CD8-positive, alpha-beta T cell (primary cell): ENCODE measurements at regions of chr5 and their contacts with region 1.

Region 1: GRCh38 chr5:111512375-111513130 is at the start of gene STARD4:
- DNase-seq: peak; percentile 89 to 97 (median 95)
- ATAC-seq: peak; percentile 94
- H3K4me3 ChIP-seq: peak within 1 kb of the TSS; percentile 96 to 97
- H3K4me3 Mint-ChIP-seq: peak within 1 kb of the TSS; percentile 96
- H3K27ac ChIP-seq: peak within 1 kb of the TSS; percentile 75 to 92
- H3K27ac Mint-ChIP-seq: peak within 1 kb of the TSS; percentile 95
- H3K4me1 ChIP-seq: peaks cover 26% of the 10 kb centered on the region
- H3K4me1 Mint-ChIP-seq: peaks cover 41% of the 10 kb centered on the region
- H3K27me3 ChIP-seq: no peaks in the 10 kb centered on the region
- H3K27me3 Mint-ChIP-seq: no peaks in the 10 kb centered on the region
- CTCF ChIP-seq: no peak
- total RNA-seq, gene STARD4: 31.7 to 32.4 TPM

Region 2: DNA sequence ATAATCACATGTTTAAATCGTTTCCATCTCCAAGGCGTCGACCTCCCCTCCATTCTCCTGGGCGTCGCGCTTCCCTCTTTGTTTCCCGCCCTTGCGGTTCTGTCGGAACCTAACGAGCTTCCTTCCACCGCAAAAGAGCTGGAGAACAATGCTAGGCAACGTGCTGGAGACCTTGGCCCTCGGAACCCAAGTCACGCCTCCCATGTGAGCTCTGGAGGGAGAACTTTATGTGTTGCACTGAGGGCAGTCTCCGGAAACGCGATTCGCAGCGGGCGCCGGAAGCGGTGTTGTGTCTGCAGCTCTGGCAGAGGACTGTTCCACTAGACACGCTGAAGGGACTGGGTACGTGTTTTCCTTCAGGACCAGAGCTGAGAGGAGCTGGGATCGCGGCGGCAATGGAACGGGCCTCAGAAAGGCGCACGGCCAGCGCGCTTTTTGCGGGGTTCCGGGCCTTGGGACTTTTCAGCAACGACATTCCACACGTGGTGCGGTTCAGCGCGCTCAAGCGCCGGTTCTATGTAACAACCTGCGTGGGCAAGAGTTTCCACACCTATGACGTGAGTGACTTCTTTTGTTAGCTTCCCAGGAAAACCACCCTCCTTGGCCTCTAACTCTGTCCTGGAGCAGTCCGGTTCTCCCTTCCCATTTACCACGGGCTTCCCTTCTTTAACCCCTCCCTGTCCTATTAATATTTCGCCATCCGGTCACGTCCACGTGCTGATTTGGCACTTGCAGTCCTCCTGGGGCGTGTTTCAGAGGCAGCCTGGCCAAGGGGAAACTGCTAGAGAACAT is 420.3 kb before region 1 on chr5 and contains the start of gene WDR36:
- CTCF ChIA-PET with region 1: no interaction called
- POLR2A ChIA-PET with region 1: interaction called, 3 read pairs
- intact Hi-C with region 1: loop called in 1 of 2 experiments (anchors 1 kb)
- DNase-seq: peak; percentile 77 to 94 (median 86)
- ATAC-seq: peak; percentile 92
- H3K4me3 ChIP-seq: peak within 1 kb of the TSS; percentile 96
- H3K4me3 Mint-ChIP-seq: peak within 1 kb of the TSS; percentile 95
- H3K27ac ChIP-seq: peak within 1 kb of the TSS; percentile 86 to 89
- H3K27ac Mint-ChIP-seq: peak within 1 kb of the TSS; percentile 94
- H3K4me1 ChIP-seq: peaks cover 24% of the 10 kb centered on the region
- H3K4me1 Mint-ChIP-seq: peaks cover 38% of the 10 kb centered on the region
- H3K27me3 ChIP-seq: no peaks in the 10 kb centered on the region
- H3K27me3 Mint-ChIP-seq: peaks cover 4% of the 10 kb centered on the region
- CTCF ChIP-seq: no peak
- total RNA-seq, gene WDR36: 29.5 to 32.6 TPM

Region 3: DNA sequence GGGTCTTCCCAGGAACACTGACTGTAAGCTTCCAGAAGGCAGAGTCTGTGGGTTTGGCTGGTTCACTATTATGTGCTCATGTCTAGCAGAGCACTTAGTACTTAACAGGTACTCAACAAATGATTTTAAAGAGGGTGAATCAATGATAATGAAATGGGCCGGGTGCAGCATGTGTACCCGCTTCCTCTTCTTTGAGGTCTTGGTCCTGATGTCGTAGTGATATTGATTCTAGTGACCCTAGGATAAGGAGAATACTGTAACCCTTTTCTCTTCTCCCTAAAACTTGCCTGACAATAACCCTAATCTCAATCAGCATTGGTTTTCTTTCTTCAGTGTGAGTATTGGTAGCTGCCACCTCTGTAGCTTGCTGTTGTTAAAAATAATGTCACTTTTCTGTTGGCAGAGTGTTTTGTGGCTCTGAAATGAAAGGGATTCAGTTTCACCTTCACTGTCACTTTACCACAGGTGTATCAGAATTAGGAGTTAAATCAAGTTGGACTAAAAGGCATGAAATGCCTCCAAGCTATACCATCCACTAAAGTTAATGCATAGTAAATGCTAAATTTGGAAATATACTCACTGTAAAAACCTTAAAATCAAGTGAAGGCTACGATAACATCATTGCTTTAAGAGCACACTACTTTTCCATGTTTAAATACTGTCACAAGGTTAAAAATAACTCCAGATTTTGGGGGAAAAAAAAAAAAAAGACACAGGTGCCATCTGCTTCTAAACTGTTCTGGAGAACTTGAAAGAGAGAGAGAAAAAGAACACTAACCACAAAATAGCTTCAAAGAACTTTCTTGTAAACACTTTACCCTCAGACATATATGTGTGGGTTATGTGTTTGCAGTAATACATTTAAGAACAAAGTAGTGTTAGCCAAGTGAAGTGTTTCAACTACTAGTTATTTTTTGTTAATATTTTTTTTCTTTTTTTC is 282.4 kb before region 1 on chr5:
- CTCF ChIA-PET with region 1: no interaction called
- POLR2A ChIA-PET with region 1: no interaction called
- intact Hi-C with region 1: loop called in 1 of 2 experiments (anchors 2 kb)
- DNase-seq: peak in 2 of 9 experiments; percentile 67 to 83
- ATAC-seq: peak; percentile 36
- H3K4me3 ChIP-seq: peak overlapping the region; percentile 4 to 46
- H3K4me3 Mint-ChIP-seq: peak overlapping the region; percentile 79
- H3K27ac ChIP-seq: peak overlapping the region; percentile 31 to 72
- H3K27ac Mint-ChIP-seq: peak overlapping the region; percentile 99
- H3K4me1 ChIP-seq: peaks cover 75% of the 10 kb centered on the region
- H3K4me1 Mint-ChIP-seq: peaks cover 74% of the 10 kb centered on the region
- H3K27me3 ChIP-seq: no peaks in the 10 kb centered on the region
- H3K27me3 Mint-ChIP-seq: no peaks in the 10 kb centered on the region
- CTCF ChIP-seq: no peak

Region 4: DNA sequence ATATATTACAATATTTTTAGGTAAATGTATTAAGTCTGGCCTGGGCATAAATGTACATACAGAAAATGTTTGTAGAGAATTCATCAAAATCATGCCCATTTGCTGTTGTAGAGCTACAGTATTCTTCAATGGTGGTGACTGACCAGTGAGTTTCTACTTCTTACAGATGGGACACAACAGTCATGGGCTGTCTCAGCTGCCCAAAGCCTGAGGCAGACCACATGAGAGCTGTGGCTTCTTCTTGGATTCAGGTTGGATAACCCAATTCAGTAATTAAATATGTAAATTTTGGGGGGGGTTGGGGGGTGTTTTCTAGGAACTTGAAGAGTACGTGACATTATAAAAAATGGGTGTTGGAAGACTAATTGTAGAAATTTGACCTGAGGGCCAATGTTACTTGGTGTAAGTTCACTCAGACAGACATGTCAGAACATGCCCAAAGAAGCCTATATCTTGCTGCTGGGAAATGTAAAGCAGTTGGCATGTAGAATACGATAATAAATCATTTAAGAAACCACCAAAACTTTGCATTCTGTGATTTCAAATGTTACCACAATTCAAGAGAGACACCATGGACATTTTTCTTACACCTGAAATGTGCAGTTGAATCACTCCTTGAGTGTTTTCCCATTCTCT is 18.1 kb before region 1 on chr5:
- CTCF ChIA-PET with region 1: interaction called, 5 read pairs
- POLR2A ChIA-PET with region 1: interaction called, 6 read pairs
- intact Hi-C with region 1: loop called in 1 of 2 experiments (anchors 2 kb)
- DNase-seq: no peak
- ATAC-seq: no peak
- H3K4me3 ChIP-seq: no peak overlapping the region
- H3K4me3 Mint-ChIP-seq: no peak overlapping the region
- H3K27ac ChIP-seq: no peak overlapping the region
- H3K27ac Mint-ChIP-seq: no peak overlapping the region
- H3K4me1 ChIP-seq: no peaks in the 10 kb centered on the region
- H3K4me1 Mint-ChIP-seq: peaks cover 17% of the 10 kb centered on the region
- H3K27me3 ChIP-seq: no peaks in the 10 kb centered on the region
- H3K27me3 Mint-ChIP-seq: no peaks in the 10 kb centered on the region
- CTCF ChIP-seq: no peak

Region 5: DNA sequence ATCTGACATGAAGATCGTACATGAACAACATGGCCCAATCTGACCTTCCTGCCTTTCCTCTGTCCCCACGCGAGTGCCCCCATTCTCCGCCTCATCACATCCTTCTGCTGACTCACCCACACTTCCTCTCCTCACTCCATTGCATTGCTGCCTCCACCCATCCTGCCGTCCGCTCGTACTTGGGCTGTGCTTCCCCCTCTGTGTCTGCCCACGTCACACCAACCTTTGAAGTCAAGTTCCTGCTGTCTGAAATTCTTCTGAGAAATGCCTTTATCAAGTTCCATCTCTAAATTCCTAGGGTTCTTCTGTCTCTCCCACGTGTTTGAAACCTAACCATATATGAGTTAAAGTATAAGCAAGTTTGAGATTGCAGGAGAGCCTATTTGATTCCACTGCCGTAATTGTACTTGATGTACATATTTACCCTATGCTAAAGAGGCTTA is 17.8 kb after region 1 on chr5:
- CTCF ChIA-PET with region 1: interaction called, 9 read pairs
- POLR2A ChIA-PET with region 1: interaction called, 5 read pairs
- intact Hi-C with region 1: loop called (anchors 1 to 2 kb)
- DNase-seq: peak; percentile 63 to 96 (median 83)
- ATAC-seq: peak; percentile 99
- H3K4me3 ChIP-seq: no peak overlapping the region
- H3K4me3 Mint-ChIP-seq: peak overlapping the region; percentile 21
- H3K27ac ChIP-seq: peak overlapping the region; percentile 26 to 81
- H3K27ac Mint-ChIP-seq: peak overlapping the region; percentile 83
- H3K4me1 ChIP-seq: peaks cover 7% of the 10 kb centered on the region
- H3K4me1 Mint-ChIP-seq: peaks cover 12% of the 10 kb centered on the region
- H3K27me3 ChIP-seq: no peaks in the 10 kb centered on the region
- H3K27me3 Mint-ChIP-seq: no peaks in the 10 kb centered on the region
- CTCF ChIP-seq: no peak

Region 6: GRCh38 chr5:111757355-111758283 is 245.1 kb after region 1 on chr5:
- CTCF ChIA-PET with region 1: no interaction called
- POLR2A ChIA-PET with region 1: interaction called, 4 read pairs
- intact Hi-C with region 1: loop called in 1 of 2 experiments (anchors 10 kb)
- DNase-seq: peak; percentile 39 to 89 (median 81)
- ATAC-seq: peak; percentile 81
- H3K4me3 ChIP-seq: peak overlapping the region; percentile 59 to 88
- H3K4me3 Mint-ChIP-seq: peak overlapping the region; percentile 90
- H3K27ac ChIP-seq: peak overlapping the region; percentile 51 to 74
- H3K27ac Mint-ChIP-seq: peak overlapping the region; percentile 90
- H3K4me1 ChIP-seq: peaks cover 13% of the 10 kb centered on the region
- H3K4me1 Mint-ChIP-seq: peaks cover 21% of the 10 kb centered on the region
- H3K27me3 ChIP-seq: no peaks in the 10 kb centered on the region
- H3K27me3 Mint-ChIP-seq: no peaks in the 10 kb centered on the region
- CTCF ChIP-seq: no peak